Prostate gland (tissue), 2 donors: ENCODE measurements at regions of chrX and their contacts with region 1.

Region 1: GRCh38 chrX:102067966-102068708 is 57.3 kb upstream of the TCEAL2 start:
- DNase-seq: no peak
- H3K4me3 ChIP-seq: no peak overlapping the region
- H3K27ac ChIP-seq: no peak overlapping the region
- H3K4me1 ChIP-seq: no peaks in the 10 kb centered on the region
- H3K27me3 ChIP-seq: no peaks in the 10 kb centered on the region
- CTCF ChIP-seq: peak in 2 of 4 experiments; percentile 34 to 37
- POLR2A ChIP-seq: no peak

Region 2: DNA sequence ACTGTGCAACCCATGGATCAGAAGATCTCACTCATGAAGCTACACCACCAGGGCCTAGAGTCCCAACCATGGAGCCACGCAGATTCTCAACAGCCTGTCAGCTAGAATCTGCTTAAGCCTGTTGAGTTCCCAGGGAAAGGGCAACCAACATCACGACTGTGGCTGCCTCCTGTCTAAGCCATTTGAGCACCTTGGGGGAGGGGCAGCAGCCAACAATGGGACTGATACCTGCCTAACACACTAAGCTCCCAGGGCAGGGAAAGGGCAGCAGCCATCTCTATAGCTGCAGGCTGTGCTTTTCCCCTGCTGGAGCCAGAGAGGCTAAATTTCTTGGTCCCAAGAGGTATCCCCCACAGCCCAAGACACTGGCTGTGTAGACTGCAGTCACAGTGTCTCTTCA is 39.1 kb before region 1 on chrX:
- intact Hi-C with region 1: no loop called
- DNase-seq: no peak
- H3K4me3 ChIP-seq: no peak overlapping the region
- H3K27ac ChIP-seq: no peak overlapping the region
- H3K4me1 ChIP-seq: no peaks in the 10 kb centered on the region
- H3K27me3 ChIP-seq: no peaks in the 10 kb centered on the region
- CTCF ChIP-seq: no peak
- POLR2A ChIP-seq: no peak

Region 3: GRCh38 chrX:102899940-102900916 is 832.1 kb after region 1 on chrX:
- intact Hi-C with region 1: loop called (anchors 5 kb)
- DNase-seq: peak; percentile 4
- H3K4me3 ChIP-seq: no peak overlapping the region
- H3K27ac ChIP-seq: no peak overlapping the region
- H3K4me1 ChIP-seq: no peaks in the 10 kb centered on the region
- H3K27me3 ChIP-seq: no peaks in the 10 kb centered on the region
- CTCF ChIP-seq: peak in 3 of 4 experiments; percentile 26 to 46 (median 36)
- POLR2A ChIP-seq: no peak